ENCODE measurements at regions of chr5 and their contacts with region 1.

Region 1: GRCh38 chr5:142655339-142656267 is 30.3 kb downstream of the FGF1 start:
- DNase-seq: peak; percentile 93
- ATAC-seq: peak; percentile 96

Region 2: DNA sequence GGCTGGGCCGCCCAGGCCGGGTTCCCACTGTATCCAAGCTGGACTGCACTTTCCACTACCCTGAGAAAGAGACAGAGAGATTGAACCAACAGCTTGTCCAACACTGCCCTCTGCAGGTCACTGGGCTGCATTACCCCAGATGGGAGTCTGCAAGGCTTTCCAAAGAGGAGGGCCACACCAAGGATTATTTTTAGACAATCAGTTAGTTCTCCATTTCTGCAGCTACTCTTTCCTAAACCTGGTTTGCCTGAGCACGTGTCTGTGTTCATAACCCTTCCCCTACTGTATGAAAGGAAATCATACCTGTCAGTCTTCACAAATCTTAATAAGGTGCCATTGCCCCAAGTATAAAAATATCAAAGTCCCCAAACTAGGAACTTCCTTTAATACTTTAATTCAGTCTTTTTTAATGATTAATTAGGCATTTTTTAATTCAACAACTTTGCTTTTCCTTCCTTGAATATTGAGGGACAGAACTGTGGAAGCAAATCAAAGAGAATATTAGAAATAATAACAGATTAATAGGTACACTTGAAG is 43.6 kb after region 1 on chr5:
- intact Hi-C with region 1: loop called (anchors 2 kb)
- DNase-seq: peak; percentile 92
- ATAC-seq: peak; percentile 90

Region 3: DNA sequence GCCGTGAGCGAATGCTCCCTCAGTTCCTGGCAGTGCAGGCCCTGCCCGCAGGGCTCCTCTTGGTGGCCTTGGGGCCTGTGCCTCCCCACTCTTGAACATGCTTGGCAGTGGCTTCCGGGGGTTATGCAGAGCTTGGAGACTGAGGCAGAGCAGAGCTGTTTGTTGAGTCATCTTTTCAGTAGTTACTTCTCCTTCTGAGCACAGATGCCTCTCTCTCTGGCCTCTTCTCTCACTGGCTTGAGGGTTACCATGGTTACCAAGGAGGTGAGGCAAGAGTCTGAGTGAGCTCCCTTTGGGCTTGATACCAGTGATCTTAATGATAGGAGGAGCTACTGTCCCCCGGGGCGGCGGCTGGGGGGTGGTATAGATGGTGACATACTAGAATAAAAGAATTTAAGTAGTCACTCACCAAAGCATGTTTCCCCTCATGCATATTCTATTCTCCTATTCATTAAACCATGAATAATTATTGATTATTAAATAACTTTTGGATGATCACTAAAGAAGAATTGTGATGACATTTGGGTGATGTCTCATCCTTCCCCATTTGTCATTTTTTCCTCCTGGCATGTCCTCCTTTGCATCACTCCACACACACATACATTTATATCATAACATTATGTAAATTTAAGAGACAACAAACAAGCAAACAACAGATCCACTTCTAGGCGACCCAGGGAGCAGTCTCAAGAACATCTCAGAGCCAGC is 225.6 kb after region 1 on chr5:
- intact Hi-C with region 1: loop called (anchors 5 kb)
- DNase-seq: no peak
- ATAC-seq: peak; percentile 1

Region 4: DNA sequence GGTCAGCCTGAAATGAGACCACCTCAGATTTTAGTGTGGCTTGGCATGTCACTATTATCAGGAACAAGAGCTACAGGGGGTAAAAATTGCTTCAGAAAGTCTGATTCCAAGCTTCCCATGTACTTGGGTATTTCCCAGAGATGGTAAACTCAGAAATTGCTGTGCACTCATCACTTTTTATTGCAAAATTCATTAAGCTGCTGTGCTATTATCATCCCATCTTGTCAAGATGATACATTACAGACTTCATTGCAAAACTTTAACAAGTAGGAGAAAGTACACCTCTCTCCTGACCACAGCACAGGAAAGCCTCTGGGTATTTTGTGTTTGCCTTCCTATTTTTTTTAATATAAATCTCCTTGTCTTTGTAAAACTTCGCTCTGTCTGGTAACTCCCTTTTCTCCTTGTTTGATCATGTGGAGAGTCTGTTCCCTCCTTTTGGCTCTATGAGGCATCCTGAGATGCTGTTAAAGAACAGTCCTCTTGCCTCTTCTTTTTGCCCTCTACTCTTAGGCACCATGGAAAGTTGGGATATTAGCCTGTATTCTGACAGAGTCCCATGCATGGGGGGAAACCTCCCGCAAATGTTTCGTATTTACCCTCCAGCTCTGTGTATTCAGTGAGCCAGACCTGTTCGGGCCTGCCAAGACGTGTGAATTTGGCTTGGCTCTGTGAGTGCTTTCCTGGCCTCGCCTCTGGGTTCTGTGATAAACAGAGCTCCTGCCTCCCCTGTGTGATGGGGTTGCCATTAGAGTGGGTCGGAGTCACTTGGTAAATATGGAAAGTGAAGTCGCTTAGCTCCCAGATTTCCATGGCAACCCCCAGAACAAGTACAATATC is 487.2 kb after region 1 on chr5:
- intact Hi-C with region 1: no loop called
- DNase-seq: peak; percentile 75
- ATAC-seq: peak; percentile 86

Measured in Right ventricle myocardium superior (tissue), 1 donor.